ENCODE measurements at regions of chr18 and their contacts with region 1.

Region 1: DNA sequence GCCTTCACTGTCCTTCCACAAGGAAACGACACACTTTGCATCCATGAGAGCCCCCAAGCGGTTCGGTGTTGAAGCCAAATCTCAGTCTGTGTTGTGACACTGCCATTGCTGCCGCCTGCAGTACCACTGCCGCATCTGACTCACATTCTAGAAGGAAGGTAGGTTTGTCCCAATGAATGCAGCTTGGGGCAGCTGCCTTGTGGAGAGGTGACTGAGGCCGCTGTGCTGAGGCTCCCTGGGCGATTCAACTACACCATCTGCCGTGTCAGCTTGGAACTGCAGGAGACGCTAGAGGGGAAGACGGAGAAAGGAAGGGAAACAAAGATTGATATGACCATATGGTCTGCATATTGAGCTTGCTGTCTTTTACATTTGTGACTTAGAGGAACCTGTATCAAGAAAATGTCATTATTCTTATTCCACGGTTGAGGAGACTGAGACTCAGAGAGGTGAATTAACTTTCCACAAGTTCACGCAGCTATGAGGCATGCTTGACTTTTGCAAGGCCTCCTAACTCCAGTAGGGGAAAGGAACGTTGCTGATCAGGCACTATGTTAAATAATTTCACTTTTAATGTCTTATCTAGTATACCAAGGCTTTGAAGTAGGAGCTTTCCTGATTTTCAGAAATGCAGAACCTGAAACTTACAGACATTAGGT is 43.5 kb upstream of the LMAN1 start:
- DNase-seq: peak; percentile 85
- H3K4me3 Mint-ChIP-seq: no peak overlapping the region
- H3K27ac Mint-ChIP-seq: no peak overlapping the region
- H3K4me1 Mint-ChIP-seq: no peaks in the 10 kb centered on the region
- H3K27me3 Mint-ChIP-seq: peaks cover 3% of the 10 kb centered on the region

Region 2: DNA sequence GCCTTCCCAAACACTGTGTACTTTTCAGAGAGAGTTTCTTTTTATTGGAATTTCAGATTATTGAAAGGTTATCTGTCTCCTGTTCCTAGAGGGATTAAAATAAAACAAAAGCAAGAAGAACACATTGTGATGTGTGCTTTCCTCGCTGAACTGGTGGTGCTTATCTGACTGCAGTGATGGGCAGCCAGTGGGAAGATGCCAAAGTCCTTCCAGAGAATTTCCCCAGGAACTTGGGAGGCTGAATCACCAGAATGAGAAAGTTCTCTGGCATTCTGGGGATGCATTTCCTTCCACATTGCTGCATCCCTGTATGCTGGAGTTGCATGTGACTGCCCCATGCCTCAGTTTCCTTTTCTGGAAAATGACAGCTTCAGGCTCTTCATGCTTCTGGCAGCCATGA is 316.8 kb before region 1 on chr18:
- CTCF ChIA-PET with region 1: interaction called, 19 read pairs
- POLR2A ChIA-PET with region 1: no interaction called
- intact Hi-C with region 1: loop called (anchors 2 kb)
- DNase-seq: no peak
- H3K4me3 Mint-ChIP-seq: no peak overlapping the region
- H3K27ac Mint-ChIP-seq: no peak overlapping the region
- H3K4me1 Mint-ChIP-seq: peaks cover 8% of the 10 kb centered on the region
- H3K27me3 Mint-ChIP-seq: peaks cover 16% of the 10 kb centered on the region

Region 3: DNA sequence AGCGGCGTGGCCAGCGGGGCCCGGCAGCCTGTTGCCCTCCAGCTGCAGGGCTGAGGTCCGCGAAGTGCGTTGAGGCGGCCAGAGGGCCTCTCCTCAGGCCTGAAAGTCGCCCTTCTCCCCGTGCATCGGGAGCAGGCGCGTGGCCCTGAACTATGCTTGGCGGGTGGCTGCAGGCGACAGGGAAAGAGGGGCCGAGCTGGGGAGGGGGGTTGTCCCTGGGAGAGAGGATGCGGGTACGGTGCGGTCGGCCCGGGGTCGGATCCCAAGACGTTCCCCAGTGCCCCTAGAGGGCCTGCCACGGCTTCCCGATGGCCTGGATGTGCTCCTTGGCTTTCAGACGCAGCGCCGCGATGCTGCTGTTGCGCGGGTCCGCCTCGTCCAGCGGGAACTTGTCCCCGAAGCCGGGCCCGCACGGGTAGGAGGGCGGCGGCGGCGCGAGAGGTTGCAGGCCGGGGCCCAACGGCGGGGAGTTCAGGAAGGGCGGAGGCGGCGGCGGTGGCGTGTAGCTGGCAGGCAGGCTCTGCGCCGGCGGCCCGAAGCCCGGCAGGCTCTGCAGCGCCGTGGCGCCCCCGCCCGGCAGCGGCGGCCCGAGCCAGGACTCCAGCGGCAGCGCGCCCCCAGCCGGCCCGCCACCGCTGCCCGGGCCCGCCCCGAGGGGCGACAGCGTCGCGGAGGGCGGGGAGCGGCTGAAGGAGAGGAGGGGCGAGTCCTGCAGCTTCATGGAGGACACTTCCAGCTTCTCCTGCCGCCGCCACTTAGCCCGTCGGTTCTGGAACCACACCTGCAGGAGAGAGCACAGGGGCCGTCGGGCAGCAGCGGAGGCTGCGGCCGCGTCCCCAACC is 133.6 kb before region 1 on chr18:
- CTCF ChIA-PET with region 1: interaction called, 12 read pairs
- POLR2A ChIA-PET with region 1: no interaction called
- intact Hi-C with region 1: loop called (anchors 5 kb)
- DNase-seq: peak; percentile 72
- H3K4me3 Mint-ChIP-seq: peak overlapping the region; percentile 29
- H3K27ac Mint-ChIP-seq: no peak overlapping the region
- H3K4me1 Mint-ChIP-seq: peaks cover 43% of the 10 kb centered on the region
- H3K27me3 Mint-ChIP-seq: peaks cover 79% of the 10 kb centered on the region

Region 4: DNA sequence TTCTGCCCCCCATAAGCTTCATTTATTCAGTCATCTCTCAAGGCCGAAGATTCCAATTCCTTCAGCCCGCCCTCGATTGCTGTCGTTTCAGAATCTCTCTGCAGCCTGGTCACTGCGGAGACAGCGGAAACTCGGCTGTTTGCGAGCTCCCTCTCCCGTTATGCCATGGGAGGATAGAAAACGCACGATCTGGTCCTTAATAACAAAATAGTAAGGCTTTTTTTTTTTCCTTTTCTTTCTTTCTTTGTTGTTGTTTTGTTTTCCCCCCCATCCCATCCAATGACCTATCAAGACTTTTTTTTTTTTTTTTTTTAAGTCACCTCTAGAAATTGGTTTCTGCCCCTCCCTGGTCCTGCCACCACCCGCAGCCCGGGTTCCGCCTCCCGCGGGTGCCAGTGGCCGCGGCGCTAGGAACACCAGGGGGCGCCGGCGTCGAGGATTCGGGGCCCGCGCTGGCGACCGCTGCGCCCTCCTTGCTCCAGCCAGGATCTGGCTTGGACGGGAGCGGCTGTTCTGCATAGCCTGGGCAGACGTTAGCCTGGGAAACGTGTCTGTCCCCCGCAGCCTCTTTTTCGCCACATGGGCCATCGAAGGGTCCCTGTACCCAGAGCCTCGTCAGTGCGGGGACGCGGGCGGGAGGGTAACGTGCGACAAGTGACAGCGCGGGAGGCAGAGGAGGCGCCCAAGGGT is 94.2 kb before region 1 on chr18:
- CTCF ChIA-PET with region 1: interaction called, 201 read pairs
- POLR2A ChIA-PET with region 1: interaction called, 3 read pairs
- intact Hi-C with region 1: loop called (anchors 2 kb)
- DNase-seq: peak; percentile 75
- H3K4me3 Mint-ChIP-seq: no peak overlapping the region
- H3K27ac Mint-ChIP-seq: no peak overlapping the region
- H3K4me1 Mint-ChIP-seq: peaks cover 3% of the 10 kb centered on the region
- H3K27me3 Mint-ChIP-seq: peaks cover 37% of the 10 kb centered on the region

Region 5: GRCh38 chr18:59353079-59353680 is 49.4 kb before region 1 on chr18:
- CTCF ChIA-PET with region 1: interaction called, 32 read pairs
- POLR2A ChIA-PET with region 1: no interaction called
- intact Hi-C with region 1: loop called (anchors 2 kb)
- DNase-seq: no peak
- H3K4me3 Mint-ChIP-seq: no peak overlapping the region
- H3K27ac Mint-ChIP-seq: no peak overlapping the region
- H3K4me1 Mint-ChIP-seq: peaks cover 37% of the 10 kb centered on the region
- H3K27me3 Mint-ChIP-seq: no peaks in the 10 kb centered on the region

Region 6: GRCh38 chr18:59387687-59388565 is 14.6 kb before region 1 on chr18:
- CTCF ChIA-PET with region 1: interaction called, 20 read pairs
- POLR2A ChIA-PET with region 1: no interaction called
- intact Hi-C with region 1: no loop called
- DNase-seq: no peak
- H3K4me3 Mint-ChIP-seq: no peak overlapping the region
- H3K27ac Mint-ChIP-seq: no peak overlapping the region
- H3K4me1 Mint-ChIP-seq: no peaks in the 10 kb centered on the region
- H3K27me3 Mint-ChIP-seq: peaks cover 4% of the 10 kb centered on the region

Region 7: DNA sequence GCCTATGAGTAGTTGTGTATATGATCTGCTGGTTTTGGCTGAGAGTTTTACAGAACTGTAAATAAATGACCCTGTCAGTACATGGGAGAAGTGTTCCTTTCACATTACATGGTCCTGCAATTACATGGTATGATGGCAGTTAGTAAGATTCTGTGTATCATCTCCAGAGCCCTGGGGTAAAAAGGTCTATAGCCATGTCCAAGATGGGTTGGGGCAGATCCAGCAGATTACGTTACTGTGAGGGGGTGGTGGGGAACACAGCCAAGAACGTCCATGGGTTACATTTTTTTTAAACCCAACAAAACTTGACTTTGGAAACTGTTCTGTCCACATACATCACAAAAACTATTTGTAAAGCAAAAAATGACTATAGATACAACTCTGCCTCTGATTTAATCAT is 20.7 kb after region 1 on chr18:
- CTCF ChIA-PET with region 1: no interaction called
- POLR2A ChIA-PET with region 1: no interaction called
- intact Hi-C with region 1: no loop called
- DNase-seq: no peak
- H3K4me3 Mint-ChIP-seq: no peak overlapping the region
- H3K27ac Mint-ChIP-seq: no peak overlapping the region
- H3K4me1 Mint-ChIP-seq: no peaks in the 10 kb centered on the region
- H3K27me3 Mint-ChIP-seq: peaks cover 10% of the 10 kb centered on the region